ENCODE measurements at regions of chr4 and their contacts with region 1.

Region 1: DNA sequence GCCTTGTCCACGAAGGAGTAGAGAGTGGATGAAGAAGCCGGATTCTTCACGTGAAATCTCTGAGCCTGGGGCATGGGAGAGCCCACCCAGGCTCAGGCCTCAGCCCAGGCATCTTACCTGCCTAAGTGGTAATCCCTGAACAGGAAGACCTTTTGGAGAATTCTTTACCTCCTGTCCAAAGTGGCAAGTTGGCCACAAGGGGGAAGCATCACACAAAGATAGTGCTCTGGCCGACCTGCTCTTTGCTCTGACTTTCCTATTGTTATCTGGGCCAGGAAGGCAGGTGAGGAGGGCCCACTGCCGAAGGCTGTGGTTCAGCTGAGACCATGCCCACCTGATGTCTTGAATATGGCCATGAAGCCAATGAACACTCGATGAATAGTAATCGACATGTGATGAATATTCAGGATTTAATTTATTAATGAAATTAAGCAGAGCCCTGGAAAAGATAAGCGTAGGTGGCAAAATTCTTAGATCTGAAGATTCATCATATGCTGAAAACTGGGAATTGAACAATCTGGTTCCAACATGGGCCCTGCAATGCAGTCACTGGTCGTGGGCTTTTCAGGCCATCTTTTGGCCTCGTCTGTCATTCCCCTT is 93.8 kb downstream of the PDGFRA start:
- DNase-seq: peak; percentile 53
- H3K4me3 ChIP-seq: no peak overlapping the region
- H3K27ac ChIP-seq: no peak overlapping the region
- H3K4me1 ChIP-seq: no peaks in the 10 kb centered on the region
- H3K27me3 ChIP-seq: no peaks in the 10 kb centered on the region
- CTCF ChIP-seq: peak; percentile 59

Region 2: GRCh38 chr4:54440394-54441136 is 117.6 kb after region 1 on chr4:
- CTCF ChIA-PET with region 1: interaction called, 4 read pairs
- POLR2A ChIA-PET with region 1: no interaction called
- intact Hi-C with region 1: loop called (anchors 5 kb)
- DNase-seq: peak; percentile 45
- H3K4me3 ChIP-seq: no peak overlapping the region
- H3K27ac ChIP-seq: no peak overlapping the region
- H3K4me1 ChIP-seq: no peaks in the 10 kb centered on the region
- H3K27me3 ChIP-seq: no peaks in the 10 kb centered on the region
- CTCF ChIP-seq: peak; percentile 57

Region 3: GRCh38 chr4:54675721-54676461 is 353.0 kb after region 1 on chr4:
- CTCF ChIA-PET with region 1: no interaction called
- POLR2A ChIA-PET with region 1: no interaction called
- intact Hi-C with region 1: loop called (anchors 5 kb)
- DNase-seq: peak; percentile 44
- H3K4me3 ChIP-seq: no peak overlapping the region
- H3K27ac ChIP-seq: peak overlapping the region; percentile 93
- H3K4me1 ChIP-seq: peaks cover 62% of the 10 kb centered on the region
- H3K27me3 ChIP-seq: no peaks in the 10 kb centered on the region
- CTCF ChIP-seq: 0 out of 2 replicates have a peak, but pooled peaks have one; percentile 23

Region 4: GRCh38 chr4:54961357-54961975 is 638.5 kb after region 1 on chr4:
- CTCF ChIA-PET with region 1: no interaction called
- POLR2A ChIA-PET with region 1: no interaction called
- intact Hi-C with region 1: loop called (anchors 2 kb)
- DNase-seq: peak; percentile 30
- H3K4me3 ChIP-seq: no peak overlapping the region
- H3K27ac ChIP-seq: no peak overlapping the region
- H3K4me1 ChIP-seq: no peaks in the 10 kb centered on the region
- H3K27me3 ChIP-seq: no peaks in the 10 kb centered on the region
- CTCF ChIP-seq: peak; percentile 61

Region 5: DNA sequence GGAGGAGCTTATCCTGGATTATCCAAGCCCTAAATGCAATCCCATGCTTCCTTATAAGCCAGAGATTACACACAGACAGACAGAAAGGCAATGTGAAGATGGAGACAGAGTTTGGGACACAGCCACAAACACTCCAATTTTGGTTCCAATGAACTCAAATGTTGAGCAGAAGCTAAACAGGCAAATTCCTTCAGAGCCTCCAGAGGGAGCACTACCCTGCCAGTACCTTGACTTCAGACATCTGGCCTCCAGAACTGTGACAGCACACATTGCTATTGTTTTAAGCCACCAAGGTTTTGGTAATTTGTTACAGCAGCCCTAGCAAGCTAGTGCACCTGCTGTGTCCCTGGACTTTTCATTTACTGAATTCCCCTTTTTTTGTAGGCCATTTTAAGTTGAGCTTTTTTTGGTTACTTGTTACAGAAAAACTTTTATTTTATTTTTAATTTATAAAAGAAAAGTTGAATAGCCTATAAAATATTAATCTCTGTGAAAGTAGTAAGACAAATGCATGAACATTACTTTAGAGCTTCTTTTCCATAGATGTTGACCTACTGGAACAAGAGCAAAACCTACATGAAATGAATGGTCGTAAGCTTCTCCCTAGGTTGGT is 989.7 kb after region 1 on chr4:
- CTCF ChIA-PET with region 1: no interaction called
- POLR2A ChIA-PET with region 1: no interaction called
- intact Hi-C with region 1: loop called (anchors 10 kb)
- DNase-seq: peak; percentile 41
- H3K4me3 ChIP-seq: no peak overlapping the region
- H3K27ac ChIP-seq: no peak overlapping the region
- H3K4me1 ChIP-seq: no peaks in the 10 kb centered on the region
- H3K27me3 ChIP-seq: no peaks in the 10 kb centered on the region
- CTCF ChIP-seq: peak; percentile 52

Measured in A673 (cell line).